CD8-positive, alpha-beta T cell (primary cell): ENCODE measurements at regions of chr13 and their contacts with region 1.

Region 1: GRCh38 chr13:71902676-71903075 is 35.7 kb upstream of the DACH1 start:
- DNase-seq: no peak
- ATAC-seq: no peak
- H3K4me3 ChIP-seq: no peak overlapping the region
- H3K4me3 Mint-ChIP-seq: no peak overlapping the region
- H3K27ac ChIP-seq: no peak overlapping the region
- H3K27ac Mint-ChIP-seq: no peak overlapping the region
- H3K4me1 ChIP-seq: no peaks in the 10 kb centered on the region
- H3K4me1 Mint-ChIP-seq: no peaks in the 10 kb centered on the region
- H3K27me3 ChIP-seq: no peaks in the 10 kb centered on the region
- H3K27me3 Mint-ChIP-seq: no peaks in the 10 kb centered on the region
- CTCF ChIP-seq: no peak

Region 2: GRCh38 chr13:70616847-70617246 is 1285.8 kb before region 1 on chr13:
- CTCF ChIA-PET with region 1: no interaction called
- POLR2A ChIA-PET with region 1: no interaction called
- intact Hi-C with region 1: loop called in 1 of 2 experiments (anchors 5 kb)
- DNase-seq: no peak
- ATAC-seq: no peak
- H3K4me3 ChIP-seq: no peak overlapping the region
- H3K4me3 Mint-ChIP-seq: no peak overlapping the region
- H3K27ac ChIP-seq: no peak overlapping the region
- H3K27ac Mint-ChIP-seq: no peak overlapping the region
- H3K4me1 ChIP-seq: no peaks in the 10 kb centered on the region
- H3K4me1 Mint-ChIP-seq: no peaks in the 10 kb centered on the region
- H3K27me3 ChIP-seq: no peaks in the 10 kb centered on the region
- H3K27me3 Mint-ChIP-seq: no peaks in the 10 kb centered on the region
- CTCF ChIP-seq: no peak

Region 3: DNA sequence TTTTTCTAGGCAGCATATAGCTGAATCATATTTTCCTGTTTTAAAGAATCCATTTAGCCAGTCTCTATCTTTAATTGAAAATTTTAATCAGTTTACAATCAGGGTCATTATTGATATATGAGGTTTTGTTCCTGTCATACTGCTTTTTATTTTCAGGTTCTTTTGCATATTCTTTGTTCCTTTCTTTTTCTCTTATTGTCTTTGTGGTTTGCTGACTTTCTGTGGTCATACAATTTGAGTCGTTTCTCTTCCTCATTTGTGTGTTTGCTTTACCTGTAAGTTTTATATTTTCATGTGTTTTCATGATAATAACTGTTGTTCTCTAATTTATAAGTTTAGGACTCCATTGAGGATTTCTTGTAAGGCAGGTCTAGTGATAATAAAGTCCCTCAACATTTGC is 848.3 kb before region 1 on chr13:
- CTCF ChIA-PET with region 1: no interaction called
- POLR2A ChIA-PET with region 1: no interaction called
- intact Hi-C with region 1: no loop called
- DNase-seq: no peak
- ATAC-seq: no peak
- H3K4me3 ChIP-seq: no peak overlapping the region
- H3K4me3 Mint-ChIP-seq: no peak overlapping the region
- H3K27ac ChIP-seq: no peak overlapping the region
- H3K27ac Mint-ChIP-seq: no peak overlapping the region
- H3K4me1 ChIP-seq: no peaks in the 10 kb centered on the region
- H3K4me1 Mint-ChIP-seq: no peaks in the 10 kb centered on the region
- H3K27me3 ChIP-seq: no peaks in the 10 kb centered on the region
- H3K27me3 Mint-ChIP-seq: no peaks in the 10 kb centered on the region
- CTCF ChIP-seq: no peak

Region 4: DNA sequence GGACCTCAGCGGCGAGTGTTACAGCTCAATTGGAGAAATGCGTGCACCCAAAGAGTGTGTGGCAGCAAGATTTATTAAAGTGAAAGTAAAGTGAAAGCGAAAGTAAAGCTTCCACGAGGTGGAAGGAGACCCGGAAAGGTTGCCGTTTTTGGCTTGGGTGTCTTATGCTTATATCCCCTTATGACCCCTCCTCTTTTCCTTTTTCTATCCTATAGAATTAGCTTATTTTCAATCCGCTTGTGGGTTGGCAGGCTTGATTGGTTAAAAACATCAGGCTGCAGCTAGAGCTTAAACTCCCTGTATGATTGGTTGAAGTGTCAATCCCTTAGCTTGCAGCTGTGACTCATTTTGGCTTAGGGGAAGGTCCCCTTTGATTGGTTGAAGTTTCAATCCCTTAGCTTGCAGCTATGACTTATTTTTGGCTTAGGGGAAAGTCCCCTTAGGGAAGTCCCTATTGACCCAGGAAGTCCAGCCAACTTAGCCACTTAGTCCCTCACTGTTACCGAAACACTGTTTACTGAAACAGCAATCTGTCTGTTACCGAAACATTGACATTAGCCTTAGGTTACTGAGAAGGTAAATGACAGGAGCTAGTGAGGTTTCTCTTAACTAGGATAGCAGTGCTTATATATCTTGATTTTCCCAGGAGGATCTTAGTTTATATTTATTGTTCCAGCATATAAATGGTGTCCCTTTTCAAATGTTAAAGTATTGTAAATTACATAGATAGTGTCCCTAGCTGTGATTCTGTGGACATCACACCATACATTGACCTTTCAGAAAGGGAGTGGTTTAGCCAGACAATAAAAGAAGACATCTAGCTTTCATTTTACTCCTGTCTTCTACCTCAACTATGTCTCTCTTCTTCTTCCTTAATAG is 611.5 kb before region 1 on chr13:
- CTCF ChIA-PET with region 1: no interaction called
- POLR2A ChIA-PET with region 1: no interaction called
- intact Hi-C with region 1: no loop called
- DNase-seq: peak; percentile 1 to 86 (median 32)
- ATAC-seq: peak; percentile 70
- H3K4me3 ChIP-seq: peak overlapping the region; percentile 39 to 58
- H3K4me3 Mint-ChIP-seq: peak overlapping the region; percentile 87
- H3K27ac ChIP-seq: peak overlapping the region; percentile 26 to 74
- H3K27ac Mint-ChIP-seq: peak overlapping the region; percentile 81
- H3K4me1 ChIP-seq: peaks cover 11% of the 10 kb centered on the region
- H3K4me1 Mint-ChIP-seq: peaks cover 23% of the 10 kb centered on the region
- H3K27me3 ChIP-seq: no peaks in the 10 kb centered on the region
- H3K27me3 Mint-ChIP-seq: no peaks in the 10 kb centered on the region
- CTCF ChIP-seq: no peak

Region 5: DNA sequence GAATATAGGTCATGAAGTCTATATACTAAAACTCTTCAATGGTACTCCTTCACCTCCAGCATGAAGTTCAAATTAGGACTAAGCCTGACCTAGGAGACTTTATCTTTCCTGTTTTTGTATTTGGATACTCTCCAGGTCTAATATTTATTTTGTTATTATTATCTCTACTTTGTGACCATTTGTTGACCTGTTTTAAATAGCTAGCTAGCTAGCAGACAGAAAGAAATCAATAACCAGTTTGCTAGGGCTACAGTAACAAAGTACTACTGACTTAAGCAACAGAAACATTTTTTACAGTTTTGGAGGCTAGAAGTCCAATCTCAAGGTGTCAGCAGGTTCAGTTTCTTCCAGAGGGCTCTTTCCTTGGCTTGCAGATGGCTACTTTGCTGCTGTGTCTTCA is 20.6 kb before region 1 on chr13:
- CTCF ChIA-PET with region 1: no interaction called
- POLR2A ChIA-PET with region 1: no interaction called
- intact Hi-C with region 1: no loop called
- DNase-seq: no peak
- ATAC-seq: no peak
- H3K4me3 ChIP-seq: no peak overlapping the region
- H3K4me3 Mint-ChIP-seq: no peak overlapping the region
- H3K27ac ChIP-seq: no peak overlapping the region
- H3K27ac Mint-ChIP-seq: no peak overlapping the region
- H3K4me1 ChIP-seq: no peaks in the 10 kb centered on the region
- H3K4me1 Mint-ChIP-seq: peaks cover 2% of the 10 kb centered on the region
- H3K27me3 ChIP-seq: no peaks in the 10 kb centered on the region
- H3K27me3 Mint-ChIP-seq: no peaks in the 10 kb centered on the region
- CTCF ChIP-seq: no peak